ENCODE measurements at regions of chr1 and their contacts with region 1.

Region 1: DNA sequence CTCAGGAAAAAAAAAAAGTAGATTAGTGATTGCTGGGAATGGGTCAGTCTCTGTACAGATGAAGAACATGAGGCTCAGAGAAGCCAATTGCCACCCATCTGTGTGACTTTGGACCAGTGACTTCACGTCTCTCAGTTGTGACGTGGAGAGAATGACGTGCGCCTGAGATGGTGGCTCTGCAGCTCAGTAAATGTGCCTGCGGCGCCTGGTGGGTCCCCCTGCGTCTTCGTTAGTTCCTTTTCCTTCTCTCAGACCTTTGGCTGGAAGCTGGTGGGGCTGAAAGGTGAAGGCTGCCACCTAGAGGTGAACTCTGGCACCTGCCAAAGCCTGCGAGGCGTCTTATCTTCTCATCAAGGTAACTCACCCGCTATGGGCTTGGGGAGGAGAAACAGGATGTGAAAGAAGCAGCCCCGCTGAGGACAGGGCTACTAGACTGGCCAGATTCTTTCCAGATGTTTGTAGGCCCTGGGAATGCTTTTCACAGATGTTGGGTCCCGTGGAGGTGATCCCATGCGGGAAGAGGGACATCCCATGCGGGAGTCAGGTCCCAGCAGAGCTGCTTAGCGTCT is 8.7 kb upstream of the E2F2 start:
- DNase-seq: peak; percentile 98
- H3K4me3 ChIP-seq: peak overlapping the region in 2 of 7 experiments; percentile 29 to 58
- H3K27ac ChIP-seq: no peak overlapping the region
- H3K4me1 ChIP-seq: peaks cover 3 to 8% (median 6%) of the 10 kb centered on the region in 4 experiments
- H3K27me3 ChIP-seq: no peaks in the 10 kb centered on the region

Region 2: DNA sequence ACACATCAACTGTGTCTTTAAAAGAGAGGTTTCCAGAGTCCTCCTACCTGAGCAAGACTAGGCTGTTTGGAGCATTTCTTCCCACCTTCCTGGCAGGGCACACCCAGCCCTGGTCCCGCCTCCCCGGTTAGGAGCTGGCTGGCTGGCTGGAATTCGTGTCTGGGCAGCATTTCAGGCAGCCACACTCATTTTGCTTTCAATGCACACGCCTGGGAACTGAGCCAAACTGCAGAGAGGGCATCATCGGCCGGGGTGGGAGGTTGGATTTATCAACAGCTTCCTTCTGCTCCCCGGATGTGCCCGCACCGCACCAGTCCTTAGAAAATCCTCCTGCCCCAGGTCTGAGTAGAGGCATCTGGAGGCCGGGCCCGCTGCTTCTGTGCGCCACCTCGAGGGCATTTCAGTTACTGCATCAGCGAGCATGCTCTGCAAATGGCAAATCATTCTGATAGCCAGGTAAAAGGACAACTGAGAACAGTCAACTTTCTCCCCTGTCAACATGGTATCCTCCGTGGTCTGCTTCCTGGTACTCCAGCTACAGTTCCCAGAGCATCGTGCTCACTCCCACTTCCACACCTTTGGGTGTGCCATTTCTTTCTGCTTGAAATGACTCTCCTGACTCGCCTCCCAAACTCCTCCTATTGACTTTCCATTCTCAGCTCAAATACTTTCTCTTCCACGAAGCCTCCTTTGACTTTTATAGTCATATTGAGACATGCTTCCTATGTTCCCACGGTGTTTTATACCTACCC is 135.9 kb before region 1 on chr1:
- CTCF ChIA-PET with region 1: no interaction called
- POLR2A ChIA-PET with region 1: no interaction called
- DNase-seq: peak; percentile 70 to 79 (median 78)
- H3K4me3 ChIP-seq: peak overlapping the region in 2 of 7 experiments; percentile 16 to 57
- H3K27ac ChIP-seq: no peak overlapping the region
- H3K4me1 ChIP-seq: peaks cover 0 to 18% (median 5%) of the 10 kb centered on the region in 4 experiments
- H3K27me3 ChIP-seq: no peaks in the 10 kb centered on the region

Region 3: GRCh38 chr1:23507507-23507906 is 32.3 kb before region 1 on chr1:
- CTCF ChIA-PET with region 1: interaction called, 183 read pairs
- POLR2A ChIA-PET with region 1: no interaction called
- DNase-seq: no peak
- H3K4me3 ChIP-seq: no peak overlapping the region
- H3K27ac ChIP-seq: no peak overlapping the region
- H3K4me1 ChIP-seq: no peaks in the 10 kb centered on the region
- H3K27me3 ChIP-seq: no peaks in the 10 kb centered on the region

Region 4: DNA sequence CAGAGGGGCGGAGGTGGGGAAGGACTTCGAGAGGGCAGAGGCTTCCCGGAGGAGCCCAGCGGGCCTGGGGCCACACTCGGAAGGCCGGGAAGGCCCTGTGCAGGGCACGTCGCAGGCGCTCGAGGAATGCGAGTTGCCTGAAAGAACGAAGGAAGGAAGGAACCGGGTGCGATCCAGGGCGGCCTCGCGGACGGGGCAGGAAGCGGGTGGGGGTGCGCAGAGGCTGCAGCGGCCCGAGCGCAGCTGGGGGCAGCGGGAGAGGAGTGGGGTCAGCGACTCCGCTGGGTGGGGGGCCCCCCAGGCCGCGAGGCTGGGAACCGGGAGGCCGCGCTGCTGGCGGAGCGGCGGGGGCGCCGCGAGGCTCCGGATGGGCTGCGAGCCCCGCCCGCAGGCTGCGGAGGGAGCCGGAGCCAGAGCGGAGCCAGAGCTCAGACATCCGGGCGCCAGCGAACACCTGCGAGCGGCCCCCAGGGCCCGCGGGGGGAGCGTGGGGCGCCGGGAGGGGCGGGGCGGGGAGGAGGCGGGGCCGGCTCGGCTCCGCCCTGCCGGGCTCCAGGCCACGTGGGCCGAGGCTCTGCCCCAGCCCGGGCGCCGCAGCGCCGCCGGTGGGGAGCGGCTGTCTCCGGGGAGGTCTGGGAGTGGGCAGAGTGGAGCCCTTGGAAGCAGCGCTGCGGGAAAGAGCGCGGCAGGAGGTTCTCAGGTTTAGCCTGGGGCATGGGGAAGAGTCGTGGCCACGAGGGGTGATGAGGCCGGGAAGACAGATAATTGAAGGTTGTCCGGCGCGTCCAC is 14.9 kb after region 1 on chr1:
- CTCF ChIA-PET with region 1: interaction called, 13 read pairs
- POLR2A ChIA-PET with region 1: no interaction called
- DNase-seq: peak; percentile 69 to 92 (median 88)
- H3K4me3 ChIP-seq: peak overlapping the region; percentile 40 to 71 (median 55)
- H3K27ac ChIP-seq: peak overlapping the region in 1 of 2 experiments; percentile 82
- H3K4me1 ChIP-seq: peaks cover 5 to 40% (median 33%) of the 10 kb centered on the region in 4 experiments
- H3K27me3 ChIP-seq: peaks cover 0 to 41% (median 24%) of the 10 kb centered on the region in 5 experiments

Region 5: GRCh38 chr1:23634842-23635651 is 95.3 kb after region 1 on chr1:
- CTCF ChIA-PET with region 1: interaction called, 405 read pairs
- POLR2A ChIA-PET with region 1: interaction called, 5 read pairs
- DNase-seq: peak; percentile 60 to 82 (median 77)
- H3K4me3 ChIP-seq: peak overlapping the region in 6 of 7 experiments; percentile 5 to 77 (median 58)
- H3K27ac ChIP-seq: no peak overlapping the region
- H3K4me1 ChIP-seq: peaks cover 2 to 21% (median 20%) of the 10 kb centered on the region in 4 experiments
- H3K27me3 ChIP-seq: peaks cover 0 to 2% (median 0%) of the 10 kb centered on the region in 5 experiments

Region 6: DNA sequence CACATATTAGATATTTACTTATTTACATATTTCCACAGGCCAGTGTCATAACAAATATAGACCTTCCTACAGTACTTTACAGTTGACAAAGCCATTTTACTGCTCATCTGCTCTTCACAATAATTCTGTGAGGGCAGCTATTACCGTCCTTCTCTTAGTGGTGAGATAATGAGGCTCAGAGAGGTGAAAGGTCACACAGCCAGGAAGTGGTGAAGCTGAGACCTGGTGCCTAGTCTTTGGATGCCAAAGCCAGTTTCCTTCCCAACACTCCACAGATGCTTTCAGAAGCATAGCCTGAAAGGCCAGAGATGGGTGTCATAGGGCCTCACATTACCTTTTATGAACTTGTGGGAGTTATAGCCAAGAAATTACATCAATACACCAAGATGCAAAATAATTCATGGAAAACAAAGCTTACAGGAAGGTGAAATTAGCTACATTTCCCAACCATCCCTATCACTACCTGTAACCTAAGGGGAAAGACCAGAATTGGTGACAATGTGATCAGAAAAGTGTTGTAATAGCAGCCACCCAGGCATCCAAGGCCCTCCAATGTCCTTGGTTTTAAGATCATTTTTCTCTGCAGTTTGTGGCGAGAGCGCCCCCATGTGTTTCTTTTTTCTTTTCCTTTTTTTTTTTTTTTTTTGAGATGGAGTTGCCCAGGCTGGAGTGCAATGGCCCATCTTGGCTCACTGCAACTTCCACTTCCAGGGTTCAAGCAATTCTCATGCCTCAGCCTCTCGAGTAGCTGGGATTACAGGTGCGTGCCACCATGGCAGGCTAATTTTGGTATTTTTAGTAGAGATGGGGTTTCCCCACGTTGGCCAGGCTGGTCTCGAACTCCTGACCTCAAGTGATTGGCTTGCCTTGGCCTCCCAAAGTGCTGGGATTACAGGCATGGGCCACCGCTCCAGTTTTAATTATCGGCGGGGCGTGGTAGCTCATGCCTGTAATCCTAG is 125.3 kb after region 1 on chr1:
- CTCF ChIA-PET with region 1: interaction called, 13 read pairs
- POLR2A ChIA-PET with region 1: no interaction called
- DNase-seq: peak; percentile 15 to 45 (median 28)
- H3K4me3 ChIP-seq: no peak overlapping the region
- H3K27ac ChIP-seq: no peak overlapping the region
- H3K4me1 ChIP-seq: no peaks in the 10 kb centered on the region
- H3K27me3 ChIP-seq: peaks cover 0 to 3% (median 0%) of the 10 kb centered on the region in 5 experiments

Measured in common myeloid progenitor, CD34-positive (primary cell).